GM12878 (cell line): ENCODE measurements at regions of chr5 and their contacts with region 1.

Region 1: DNA sequence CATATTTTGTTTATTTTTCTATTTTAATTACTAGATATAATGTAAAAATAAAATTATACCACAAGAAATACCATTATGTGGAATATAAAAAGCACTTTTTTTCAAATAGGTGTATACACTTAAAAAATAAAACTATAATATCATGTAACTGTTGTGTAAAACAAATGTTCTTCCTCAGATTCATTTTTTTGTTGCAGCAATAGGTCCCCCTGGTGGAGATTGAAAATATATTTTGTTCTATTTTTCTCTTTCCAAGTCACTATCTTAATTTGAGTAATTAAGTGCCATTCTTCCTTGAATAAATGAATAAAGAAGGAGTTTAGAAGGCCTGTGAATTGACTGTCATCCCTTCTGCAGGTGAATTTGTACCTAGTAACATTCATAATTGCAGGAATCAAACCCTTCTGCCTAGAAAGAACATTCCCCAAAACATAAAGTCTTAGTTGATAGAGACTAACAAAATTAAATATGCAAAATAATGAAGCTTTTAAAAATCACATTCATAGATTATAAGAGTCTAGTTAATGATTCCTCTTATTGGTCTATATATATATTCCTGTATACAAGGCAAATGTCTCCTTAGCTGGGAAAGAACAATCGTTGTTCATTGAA is 23.4 kb downstream of the CETN3 start:
- DNase-seq: no peak
- ATAC-seq: peak; percentile 48; the same call in 1 of the 3 replicates
- H3K4me3 ChIP-seq: no peak overlapping the region
- H3K27ac ChIP-seq: no peak overlapping the region
- H3K4me1 ChIP-seq: no peaks in the 10 kb centered on the region
- H3K27me3 ChIP-seq: no peaks in the 10 kb centered on the region
- CTCF ChIP-seq: peak in 2 of 3 experiments; percentile 30; a peak in 3 of 6 replicates
- EP300 ChIP-seq: no peak
- POLR2A ChIP-seq: no peak
- RAD21 ChIP-seq: peak; percentile 72

Region 2: DNA sequence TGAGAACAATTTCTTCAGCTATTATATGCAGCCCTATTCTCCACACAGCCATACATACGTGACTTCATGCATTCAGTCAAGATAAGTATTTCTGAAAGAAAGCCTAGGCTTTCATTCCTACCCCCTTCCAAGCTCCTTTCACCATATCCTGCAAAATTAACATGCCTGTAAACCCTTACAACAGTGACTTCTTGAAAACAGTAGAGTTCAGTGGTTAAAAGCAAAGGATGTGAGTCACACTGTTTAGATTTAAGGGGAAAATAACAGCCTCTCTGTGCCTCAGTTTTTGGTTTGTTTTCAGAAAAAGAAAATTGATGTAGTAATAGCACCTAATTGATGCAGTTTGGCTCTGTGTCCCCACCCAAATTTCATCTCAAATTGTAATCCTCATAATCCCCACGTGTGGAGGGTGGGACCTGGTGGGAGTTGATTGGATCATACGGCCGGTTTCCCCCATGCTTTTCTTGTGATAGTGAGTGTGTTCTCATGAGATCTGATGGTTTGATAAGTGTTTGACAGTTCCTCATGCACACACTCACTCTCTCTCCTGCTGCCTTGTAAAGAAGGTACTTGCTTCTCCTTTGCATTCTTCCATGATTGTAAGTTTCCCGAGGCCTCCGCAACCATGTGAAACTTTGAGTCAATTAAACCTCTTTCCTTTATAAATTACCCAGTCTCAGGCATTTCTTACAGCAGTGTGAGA is 241.4 kb before region 1 on chr5:
- CTCF ChIA-PET with region 1: no interaction called
- POLR2A ChIA-PET with region 1: no interaction called
- RAD21 ChIA-PET with region 1: no interaction called
- SMC1A ChIA-PET with region 1: no interaction called
- in situ Hi-C with region 1: no loop called
- intact Hi-C with region 1: no loop called
- DNase-seq: no peak
- ATAC-seq: no peak
- H3K4me3 ChIP-seq: no peak overlapping the region
- H3K27ac ChIP-seq: no peak overlapping the region
- H3K4me1 ChIP-seq: no peaks in the 10 kb centered on the region
- H3K27me3 ChIP-seq: no peaks in the 10 kb centered on the region
- CTCF ChIP-seq: no peak
- EP300 ChIP-seq: no peak
- POLR2A ChIP-seq: no peak
- RAD21 ChIP-seq: no peak

Region 3: DNA sequence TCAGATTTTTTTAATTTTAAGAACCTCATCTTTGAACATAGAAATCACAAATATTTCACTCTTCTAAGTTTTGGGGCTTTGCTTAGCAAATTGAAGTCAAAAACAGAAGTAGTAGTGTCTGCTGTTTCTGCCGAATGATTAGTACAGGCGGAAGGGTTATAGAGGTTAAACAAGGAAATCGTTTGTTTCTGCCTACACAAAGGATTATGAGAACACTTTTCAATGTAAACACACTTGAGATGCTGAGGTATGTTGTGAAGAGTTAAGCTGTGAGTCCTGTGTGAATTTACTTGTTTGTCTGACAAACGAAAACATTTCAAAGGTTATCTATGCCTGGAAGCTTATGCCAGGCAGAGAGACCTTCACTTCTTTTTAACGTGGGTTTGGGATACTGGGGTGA is 201.4 kb before region 1 on chr5:
- CTCF ChIA-PET with region 1: no interaction called
- POLR2A ChIA-PET with region 1: no interaction called
- RAD21 ChIA-PET with region 1: no interaction called
- SMC1A ChIA-PET with region 1: no interaction called
- in situ Hi-C with region 1: no loop called
- intact Hi-C with region 1: loop called (anchors 5 kb)
- DNase-seq: no peak
- ATAC-seq: no peak
- H3K4me3 ChIP-seq: no peak overlapping the region
- H3K27ac ChIP-seq: no peak overlapping the region
- H3K4me1 ChIP-seq: no peaks in the 10 kb centered on the region
- H3K27me3 ChIP-seq: no peaks in the 10 kb centered on the region
- CTCF ChIP-seq: no peak
- EP300 ChIP-seq: no peak
- POLR2A ChIP-seq: no peak
- RAD21 ChIP-seq: no peak

Region 4: DNA sequence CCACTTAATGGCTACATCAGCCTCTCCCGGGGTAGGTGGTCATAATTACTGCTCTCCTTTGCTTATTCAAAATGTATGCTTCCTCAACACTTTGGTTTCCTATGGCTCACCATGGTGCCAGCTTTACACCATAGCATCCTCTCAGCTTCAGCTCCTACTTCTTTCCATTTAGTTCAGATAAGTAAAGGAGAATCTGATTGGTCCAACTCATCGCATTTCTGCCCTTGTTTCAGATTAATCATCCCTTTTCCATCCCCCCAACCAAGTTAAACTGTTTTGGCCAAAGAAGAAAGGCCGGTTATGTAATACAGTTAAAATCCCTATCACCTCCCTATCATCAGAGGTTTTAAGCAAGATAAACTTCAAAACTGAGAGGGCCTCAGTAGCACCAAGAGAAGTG is 107.1 kb before region 1 on chr5:
- CTCF ChIA-PET with region 1: no interaction called
- POLR2A ChIA-PET with region 1: no interaction called
- RAD21 ChIA-PET with region 1: interaction called, 3 read pairs
- SMC1A ChIA-PET with region 1: interaction called, 5 read pairs
- in situ Hi-C with region 1: loop called (anchors 10 kb)
- intact Hi-C with region 1: no loop called
- DNase-seq: no peak
- ATAC-seq: no peak
- H3K4me3 ChIP-seq: no peak overlapping the region
- H3K27ac ChIP-seq: no peak overlapping the region
- H3K4me1 ChIP-seq: no peaks in the 10 kb centered on the region
- H3K27me3 ChIP-seq: no peaks in the 10 kb centered on the region
- CTCF ChIP-seq: no peak
- EP300 ChIP-seq: no peak
- POLR2A ChIP-seq: no peak
- RAD21 ChIP-seq: no peak

Region 5: DNA sequence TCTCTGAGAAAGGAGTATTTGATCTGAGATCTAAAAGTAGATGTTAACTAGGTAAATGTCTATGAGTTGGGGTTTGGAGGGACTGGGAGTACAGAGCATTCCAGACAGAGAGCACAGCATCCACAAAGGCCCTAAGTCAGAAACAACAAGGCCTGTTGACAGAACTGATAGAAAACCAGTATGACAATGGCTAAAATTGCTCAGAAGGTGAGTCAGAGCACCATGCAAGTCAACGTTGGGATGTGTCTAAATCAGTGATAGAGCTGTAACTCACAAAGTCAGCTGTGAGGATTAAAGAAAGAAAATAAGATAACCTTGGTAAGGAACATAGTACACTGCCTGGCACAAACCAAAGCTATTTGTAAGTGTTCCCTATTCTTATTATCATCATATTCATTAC is 100.6 kb before region 1 on chr5:
- CTCF ChIA-PET with region 1: interaction called, 16 read pairs
- POLR2A ChIA-PET with region 1: no interaction called
- RAD21 ChIA-PET with region 1: interaction called, 3 read pairs
- SMC1A ChIA-PET with region 1: interaction called, 3 read pairs
- in situ Hi-C with region 1: no loop called
- intact Hi-C with region 1: no loop called
- DNase-seq: no peak
- ATAC-seq: no peak
- H3K4me3 ChIP-seq: no peak overlapping the region
- H3K27ac ChIP-seq: no peak overlapping the region
- H3K4me1 ChIP-seq: no peaks in the 10 kb centered on the region
- H3K27me3 ChIP-seq: no peaks in the 10 kb centered on the region
- CTCF ChIP-seq: no peak
- EP300 ChIP-seq: no peak
- POLR2A ChIP-seq: no peak
- RAD21 ChIP-seq: no peak

Region 6: GRCh38 chr5:90398726-90399125 is 12.5 kb after region 1 on chr5:
- CTCF ChIA-PET with region 1: interaction called, 18 read pairs
- POLR2A ChIA-PET with region 1: no interaction called
- RAD21 ChIA-PET with region 1: no interaction called
- SMC1A ChIA-PET with region 1: interaction called, 14 read pairs
- in situ Hi-C with region 1: no loop called
- intact Hi-C with region 1: no loop called
- DNase-seq: no peak
- ATAC-seq: peak; percentile 44; the same call in 2 of the 3 replicates
- H3K4me3 ChIP-seq: no peak overlapping the region
- H3K27ac ChIP-seq: no peak overlapping the region
- H3K4me1 ChIP-seq: no peaks in the 10 kb centered on the region
- H3K27me3 ChIP-seq: no peaks in the 10 kb centered on the region
- CTCF ChIP-seq: no peak
- EP300 ChIP-seq: no peak
- POLR2A ChIP-seq: no peak
- RAD21 ChIP-seq: no peak